Right lobe of liver (tissue), 6 donors: ENCODE measurements at regions of chr1 and their contacts with region 1.

Region 1: GRCh38 chr1:203625628-203626019 is 1.0 kb upstream of the ATP2B4 start:
- DNase-seq: no peak
- ATAC-seq: peak; percentile 50 to 62 (median 52)
- H3K4me3 ChIP-seq: no peak overlapping the region
- H3K27ac ChIP-seq: peak overlapping the region in 2 of 3 donors; percentile 14 to 87
- H3K4me1 ChIP-seq: peaks cover 0 to 29% (median 2%) of the 10 kb centered on the region in 4 donors
- H3K27me3 ChIP-seq: no peaks in the 10 kb centered on the region
- CTCF ChIP-seq: peak; percentile 5 to 48 (median 33)
- POLR2A ChIP-seq: no peak

Region 2: GRCh38 chr1:203338335-203339036 is 287.1 kb before region 1 on chr1:
- intact Hi-C with region 1: no loop called
- DNase-seq: peak in 1 of 3 donors; percentile 45
- ATAC-seq: peak; percentile 53 to 61 (median 60)
- H3K4me3 ChIP-seq: no peak overlapping the region
- H3K27ac ChIP-seq: no peak overlapping the region
- H3K4me1 ChIP-seq: peaks cover 0 to 18% (median 2%) of the 10 kb centered on the region in 4 donors
- H3K27me3 ChIP-seq: no peaks in the 10 kb centered on the region
- CTCF ChIP-seq: peak; percentile 68 to 81 (median 76)
- POLR2A ChIP-seq: no peak

Region 3: GRCh38 chr1:203512830-203513611 is 112.6 kb before region 1 on chr1:
- intact Hi-C with region 1: loop called in 1 of 2 experiments (anchors 10 kb)
- DNase-seq: no peak
- ATAC-seq: peak in 1 of 4 donors; percentile 73
- H3K4me3 ChIP-seq: no peak overlapping the region
- H3K27ac ChIP-seq: no peak overlapping the region
- H3K4me1 ChIP-seq: no peaks in the 10 kb centered on the region
- H3K27me3 ChIP-seq: no peaks in the 10 kb centered on the region
- CTCF ChIP-seq: no peak
- POLR2A ChIP-seq: no peak

Region 4: DNA sequence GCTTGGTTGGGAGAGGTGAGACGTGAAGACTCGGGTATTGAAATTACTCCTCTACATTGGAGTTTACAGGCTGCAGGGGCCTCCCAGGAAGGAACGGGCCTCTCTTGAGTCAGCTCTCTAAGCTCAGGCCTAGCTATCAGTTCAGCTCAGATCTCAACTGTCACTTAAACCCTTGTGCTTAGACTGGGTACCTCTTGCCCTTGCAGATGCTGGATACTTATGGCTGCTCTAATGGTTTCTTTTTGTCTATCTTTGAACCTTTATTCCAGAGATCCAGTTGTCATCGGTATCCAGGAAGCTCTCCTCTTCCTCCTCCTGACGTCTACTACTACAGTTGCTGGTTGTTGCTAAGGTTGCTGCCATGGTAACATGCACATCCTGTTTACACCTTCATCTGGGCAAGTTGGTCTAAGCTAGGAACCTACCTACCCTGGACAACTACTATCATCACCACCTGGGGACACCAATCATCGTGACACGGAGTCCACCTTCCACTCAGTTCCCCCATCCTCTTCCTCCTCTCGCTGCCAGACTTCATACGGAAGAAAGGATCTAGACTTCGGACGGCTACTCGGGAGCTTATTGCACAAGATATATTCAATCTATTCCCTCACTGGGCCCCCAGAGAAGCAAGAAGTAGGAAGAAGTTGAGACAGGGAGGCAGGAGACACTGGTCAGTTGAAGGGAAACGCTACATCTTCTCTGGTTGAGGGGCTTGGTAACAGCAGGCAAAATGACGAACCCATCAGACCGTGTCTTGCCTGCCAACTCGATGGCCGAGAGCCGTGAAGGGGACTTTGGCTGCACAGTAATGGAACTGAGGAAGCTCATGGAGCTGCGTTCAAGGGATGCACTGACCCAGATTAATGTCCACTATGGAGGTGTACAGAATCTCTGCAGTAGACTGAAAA is 57.1 kb after region 1 on chr1:
- intact Hi-C with region 1: loop called in 1 of 2 experiments (anchors 10 kb)
- DNase-seq: no peak
- ATAC-seq: peak; percentile 29 to 75 (median 48)
- H3K4me3 ChIP-seq: no peak overlapping the region
- H3K27ac ChIP-seq: no peak overlapping the region
- H3K4me1 ChIP-seq: no peaks in the 10 kb centered on the region
- H3K27me3 ChIP-seq: no peaks in the 10 kb centered on the region
- CTCF ChIP-seq: no peak
- POLR2A ChIP-seq: no peak